ENCODE measurements at regions of chr9 and their contacts with region 1.

Region 1: DNA sequence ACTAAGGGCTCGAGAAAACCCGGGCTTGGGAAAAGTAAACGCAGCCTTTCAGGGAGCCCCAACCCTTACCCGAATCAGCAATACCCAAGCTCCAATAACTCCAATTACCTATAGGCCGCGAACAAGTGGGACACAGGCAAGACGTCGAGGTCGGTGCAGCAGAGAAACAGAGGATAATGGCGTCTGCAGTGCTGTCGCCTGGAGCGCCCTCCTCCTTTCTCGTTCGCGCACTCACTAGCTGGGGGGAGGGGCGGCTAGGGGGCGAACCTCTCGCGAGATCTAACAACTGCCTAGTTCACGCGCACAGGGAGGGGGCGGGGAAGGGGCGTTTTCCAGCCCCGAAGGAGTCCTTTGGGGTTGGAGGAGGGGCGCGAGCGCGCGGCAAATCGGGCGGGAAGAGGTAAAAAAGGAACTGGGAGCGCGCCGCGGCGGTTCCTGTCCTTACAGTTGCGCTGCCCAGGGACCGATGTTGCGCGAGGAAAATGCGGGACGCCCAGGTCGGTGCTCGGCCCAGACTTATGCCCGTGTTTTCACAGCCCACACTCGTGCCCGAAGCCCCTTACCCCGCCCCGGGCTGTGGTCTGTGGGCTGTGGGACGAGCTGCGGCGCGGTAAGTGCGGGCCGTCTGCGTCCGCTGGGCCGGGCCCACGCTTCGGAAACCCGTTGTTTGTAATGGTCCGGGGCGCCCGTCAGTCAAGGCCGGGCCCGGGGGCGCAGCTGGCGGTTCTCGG is at the start of gene RMI1:
- DNase-seq: peak; percentile 98 to 100 (median 100)
- H3K4me3 ChIP-seq: peak within 1 kb of the TSS; percentile 82
- H3K4me3 Mint-ChIP-seq: peak within 1 kb of the TSS; percentile 91 to 100 (median 98)
- H3K27ac ChIP-seq: peak within 1 kb of the TSS; percentile 94
- H3K27ac Mint-ChIP-seq: peak within 1 kb of the TSS; percentile 97 to 99 (median 99)
- H3K4me1 ChIP-seq: peaks cover 35% of the 10 kb centered on the region
- H3K4me1 Mint-ChIP-seq: peaks cover 45 to 57% (median 52%) of the 10 kb centered on the region in 3 donors
- H3K27me3 ChIP-seq: no peaks in the 10 kb centered on the region
- H3K27me3 Mint-ChIP-seq: peaks cover 0 to 10% of the 10 kb centered on the region in 2 donors
- total RNA-seq, gene RMI1: 29.0 to 29.3 TPM

Region 2: GRCh38 chr9:83744212-83744611 is 236.3 kb before region 1 on chr9:
- CTCF ChIA-PET with region 1: no interaction called
- POLR2A ChIA-PET with region 1: no interaction called
- DNase-seq: no peak
- H3K4me3 ChIP-seq: no peak overlapping the region
- H3K4me3 Mint-ChIP-seq: no peak overlapping the region
- H3K27ac ChIP-seq: no peak overlapping the region
- H3K27ac Mint-ChIP-seq: no peak overlapping the region
- H3K4me1 ChIP-seq: no peaks in the 10 kb centered on the region
- H3K4me1 Mint-ChIP-seq: peaks cover 0 to 4% (median 0%) of the 10 kb centered on the region in 3 donors
- H3K27me3 ChIP-seq: no peaks in the 10 kb centered on the region
- H3K27me3 Mint-ChIP-seq: peaks cover 0 to 2% of the 10 kb centered on the region in 2 donors

Region 3: GRCh38 chr9:83920927-83921707 is 59.4 kb before region 1 on chr9 and contains the start of gene KIF27:
- CTCF ChIA-PET with region 1: interaction called, 3 read pairs
- POLR2A ChIA-PET with region 1: interaction called, 15 read pairs
- DNase-seq: peak; percentile 94 to 98 (median 95)
- H3K4me3 ChIP-seq: peak within 1 kb of the TSS; percentile 48
- H3K4me3 Mint-ChIP-seq: peak within 1 kb of the TSS; percentile 89 to 96 (median 92)
- H3K27ac ChIP-seq: peak within 1 kb of the TSS; percentile 87
- H3K27ac Mint-ChIP-seq: peak within 1 kb of the TSS; percentile 95 to 98 (median 97)
- H3K4me1 ChIP-seq: no peaks in the 10 kb centered on the region
- H3K4me1 Mint-ChIP-seq: peaks cover 14 to 25% (median 16%) of the 10 kb centered on the region in 3 donors
- H3K27me3 ChIP-seq: no peaks in the 10 kb centered on the region
- H3K27me3 Mint-ChIP-seq: no peaks in the 10 kb centered on the region
- total RNA-seq, gene KIF27: 2.8 to 3.2 TPM

Region 4: DNA sequence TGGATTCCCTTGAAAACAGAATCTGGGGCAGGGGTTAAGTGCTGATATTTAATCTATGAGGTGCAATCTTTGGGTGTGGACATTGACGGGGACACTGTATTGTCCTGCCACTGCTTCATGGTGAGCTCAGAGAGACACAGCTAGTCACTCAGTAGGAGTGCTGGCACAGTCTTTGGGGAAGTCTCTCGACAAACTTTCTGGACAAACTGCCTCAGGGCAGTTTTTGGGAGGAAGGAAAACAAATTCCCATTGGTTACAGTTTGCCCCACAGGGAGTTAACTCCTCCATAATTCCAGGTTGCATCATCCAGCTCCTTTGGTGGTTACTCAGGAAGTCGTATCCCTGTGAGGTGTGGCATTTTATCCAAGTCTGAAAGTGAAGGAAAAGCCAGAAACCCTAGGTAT is 18.4 kb before region 1 on chr9:
- CTCF ChIA-PET with region 1: interaction called, 4 read pairs
- POLR2A ChIA-PET with region 1: interaction called, 22 read pairs
- DNase-seq: no peak
- H3K4me3 ChIP-seq: no peak overlapping the region
- H3K4me3 Mint-ChIP-seq: peak overlapping the region in 1 of 7 donors; percentile 13
- H3K27ac ChIP-seq: no peak overlapping the region
- H3K27ac Mint-ChIP-seq: peak overlapping the region in 2 of 8 donors; percentile 38 to 47
- H3K4me1 ChIP-seq: no peaks in the 10 kb centered on the region
- H3K4me1 Mint-ChIP-seq: peaks cover 4 to 8% (median 6%) of the 10 kb centered on the region in 3 donors
- H3K27me3 ChIP-seq: no peaks in the 10 kb centered on the region
- H3K27me3 Mint-ChIP-seq: no peaks in the 10 kb centered on the region

Measured in CD8-positive, alpha-beta memory T cell (primary cell).